ENCODE measurements at regions of chr7 and their contacts with region 1.

Region 1: DNA sequence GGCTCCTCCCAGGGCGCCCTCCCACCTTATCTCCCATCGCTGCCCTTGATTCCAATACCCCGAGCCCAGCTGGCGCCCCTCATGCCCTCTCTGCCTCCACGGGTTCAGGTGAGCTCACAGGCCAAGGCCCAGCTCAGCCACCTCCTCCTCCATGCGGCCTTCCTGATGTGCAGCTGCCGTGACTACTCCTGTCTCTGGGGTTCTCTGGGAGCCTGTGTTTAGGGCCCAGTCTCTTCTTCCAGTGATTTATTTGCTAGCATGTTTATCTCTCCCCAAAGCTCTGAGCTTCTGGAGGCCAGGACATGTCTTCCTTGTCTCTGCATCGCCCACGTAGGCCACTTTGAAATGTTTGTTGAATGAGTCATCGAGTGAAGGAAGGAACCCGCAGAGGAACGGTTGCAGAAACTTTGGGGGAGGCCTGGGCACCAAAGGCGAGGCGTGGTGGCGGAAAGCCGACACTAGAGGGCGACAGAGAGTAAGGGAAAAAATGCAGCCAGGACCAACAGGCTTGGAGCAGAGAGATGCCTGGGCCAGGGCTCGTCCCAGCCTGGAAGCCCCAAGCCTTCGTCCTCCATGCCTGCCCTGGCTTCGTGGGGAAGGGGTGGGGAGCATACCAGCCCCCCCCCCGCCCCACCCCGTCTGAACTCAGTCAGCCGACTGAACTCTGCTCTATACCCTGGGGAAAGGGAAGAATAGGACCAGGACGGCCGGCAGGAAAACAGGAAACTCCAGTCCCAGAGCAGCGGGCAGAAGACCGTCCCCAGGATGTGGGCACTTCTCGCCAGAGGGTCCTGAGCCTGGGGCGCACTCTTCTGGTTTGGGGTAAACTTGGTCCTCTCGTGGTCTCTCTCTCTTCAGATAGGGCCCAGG is 10.9 kb upstream of the HSPB1 start:
- DNase-seq: peak; percentile 97
- H3K4me3 ChIP-seq: peak overlapping the region; percentile 3 to 47 (median 34)
- H3K27ac ChIP-seq: peak overlapping the region; percentile 97 to 100 (median 99)
- H3K4me1 ChIP-seq: peaks cover 0 to 56% (median 53%) of the 10 kb centered on the region in 4 donors
- H3K27me3 ChIP-seq: no peaks in the 10 kb centered on the region
- CTCF ChIP-seq: peak; percentile 94 to 100 (median 98)
- EP300 ChIP-seq: peak in 1 of 4 donors; percentile 26
- POLR2A ChIP-seq: no peak

Region 2: DNA sequence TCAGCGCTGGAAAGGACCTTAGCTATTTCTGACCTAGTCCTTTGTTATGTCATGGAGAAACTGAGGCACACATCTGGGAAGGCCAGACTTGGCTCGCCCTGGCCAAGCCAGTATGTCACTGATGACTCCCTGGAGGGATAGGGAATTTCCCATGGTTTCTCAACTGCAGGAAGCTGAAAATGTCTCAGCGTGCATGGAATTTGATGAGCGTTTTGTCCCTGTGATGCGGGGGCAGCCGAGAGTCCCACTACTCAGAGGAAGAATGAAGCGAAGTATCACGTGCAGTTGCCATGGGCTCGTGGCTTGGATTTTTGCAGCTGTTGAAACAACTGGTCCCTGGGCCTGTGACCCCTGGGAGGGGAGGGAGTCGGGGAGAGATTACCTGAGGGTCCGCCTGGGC is 1957.5 kb before region 1 on chr7:
- intact Hi-C with region 1: no loop called
- DNase-seq: no peak
- H3K4me3 ChIP-seq: no peak overlapping the region
- H3K27ac ChIP-seq: no peak overlapping the region
- H3K4me1 ChIP-seq: no peaks in the 10 kb centered on the region
- H3K27me3 ChIP-seq: no peaks in the 10 kb centered on the region
- CTCF ChIP-seq: no peak
- EP300 ChIP-seq: no peak
- POLR2A ChIP-seq: no peak

Region 3: DNA sequence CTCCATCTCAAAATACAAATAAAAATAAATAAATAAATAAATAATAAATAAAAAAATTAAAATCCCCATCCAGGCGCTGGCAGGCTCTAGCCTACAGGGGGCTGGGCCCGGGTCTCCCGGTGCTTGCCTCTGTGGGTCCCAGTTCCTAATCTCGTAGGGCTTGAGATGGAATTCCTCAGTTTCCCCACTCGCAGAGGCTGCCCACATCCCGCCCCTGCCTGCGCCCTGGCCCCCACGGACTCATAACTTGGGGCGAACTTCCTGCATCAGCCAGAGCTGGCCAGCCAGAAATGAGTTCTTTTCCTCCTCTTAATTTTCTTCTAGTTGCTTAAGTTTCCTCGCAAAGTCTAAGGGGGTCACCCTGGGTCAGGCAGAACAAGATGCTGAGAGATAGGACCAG is 111.9 kb before region 1 on chr7:
- intact Hi-C with region 1: loop called (anchors 1 kb)
- DNase-seq: no peak
- H3K4me3 ChIP-seq: no peak overlapping the region
- H3K27ac ChIP-seq: no peak overlapping the region
- H3K4me1 ChIP-seq: peaks cover 0 to 7% (median 0%) of the 10 kb centered on the region in 4 donors
- H3K27me3 ChIP-seq: no peaks in the 10 kb centered on the region
- CTCF ChIP-seq: no peak
- EP300 ChIP-seq: no peak
- POLR2A ChIP-seq: no peak

Region 4: GRCh38 chr7:76307446-76308003 is 15.9 kb after region 1 on chr7:
- intact Hi-C with region 1: loop called (anchors 2 kb)
- DNase-seq: no peak
- H3K4me3 ChIP-seq: no peak overlapping the region
- H3K27ac ChIP-seq: peak overlapping the region; percentile 96 to 100 (median 99)
- H3K4me1 ChIP-seq: peaks cover 0 to 55% (median 44%) of the 10 kb centered on the region in 4 donors
- H3K27me3 ChIP-seq: no peaks in the 10 kb centered on the region
- CTCF ChIP-seq: no peak
- EP300 ChIP-seq: no peak
- POLR2A ChIP-seq: no peak